Naive thymus-derived CD8-positive, alpha-beta T cell (primary cell): ENCODE measurements at regions of chr6 and their contacts with region 1.

Region 1: DNA sequence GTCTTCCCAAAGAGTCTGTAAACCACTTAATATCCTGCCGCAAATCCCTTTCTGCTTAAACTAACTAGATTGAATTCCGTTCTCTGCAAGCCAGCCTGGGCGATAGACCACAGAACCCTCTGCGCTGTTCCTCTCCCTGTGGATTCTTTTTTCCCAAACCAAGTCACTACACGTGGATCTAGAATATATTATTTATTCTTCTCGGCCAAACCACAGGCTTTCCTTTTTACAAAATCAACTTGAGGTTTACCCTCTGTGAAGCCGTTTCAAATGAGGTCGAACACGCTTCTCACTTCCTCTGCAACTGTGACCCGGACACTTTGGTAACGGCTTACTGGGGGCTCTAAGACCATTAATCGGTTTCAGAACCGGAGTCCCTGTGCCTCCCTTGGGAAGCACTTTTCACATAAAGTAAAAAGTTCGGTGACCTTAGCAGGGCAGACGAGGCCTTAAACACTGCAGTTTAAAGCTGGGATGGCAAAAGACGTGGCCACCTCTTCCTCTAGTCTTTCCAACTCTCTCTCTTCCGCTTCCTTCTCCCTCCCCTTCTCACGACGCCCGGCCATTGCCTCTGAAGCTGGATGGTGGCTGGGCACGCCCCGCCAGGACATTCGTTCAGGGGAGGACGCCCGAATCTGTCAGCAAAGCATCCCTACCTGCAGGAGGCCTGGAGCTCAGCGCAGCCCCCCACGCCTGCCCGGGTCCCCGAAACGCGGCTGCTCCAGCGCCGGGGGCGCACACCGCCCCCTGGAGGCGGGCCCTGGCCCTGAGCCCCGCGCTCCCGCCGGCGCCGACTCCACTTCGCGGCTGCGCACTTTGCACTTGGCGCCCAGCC is 55.0 kb upstream of the FOXC1 start:
- DNase-seq: peak; percentile 28 to 77 (median 59)
- ATAC-seq: peak; percentile 95 to 96
- H3K4me3 Mint-ChIP-seq: peak overlapping the region; percentile 71 to 88 (median 84)
- H3K27ac Mint-ChIP-seq: peak overlapping the region in 8 of 10 donors; percentile 36 to 94 (median 84)
- H3K4me1 Mint-ChIP-seq: peaks cover 13 to 30% (median 15%) of the 10 kb centered on the region in 4 donors
- H3K27me3 Mint-ChIP-seq: peaks cover 0 to 22% (median 1%) of the 10 kb centered on the region in 5 donors

Region 2: DNA sequence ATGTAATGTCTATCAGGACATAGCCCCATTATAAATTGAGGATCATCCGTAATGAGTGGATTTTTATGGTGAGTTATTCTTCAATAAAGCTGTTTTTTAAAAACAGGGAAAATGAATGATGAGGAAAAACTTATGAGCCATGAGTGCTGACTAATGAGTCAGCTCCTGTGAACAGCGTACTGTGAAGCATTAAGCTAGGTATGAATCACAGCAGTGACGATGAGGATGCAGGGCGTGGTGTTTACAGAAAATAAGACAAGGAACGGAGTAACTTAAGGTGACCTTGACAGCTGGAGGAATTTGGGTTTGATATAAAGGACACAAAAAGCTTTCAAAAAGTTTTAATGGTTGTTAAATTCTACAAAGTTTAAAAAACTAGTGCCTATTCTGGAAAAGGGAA is 69.0 kb before region 1 on chr6:
- POLR2A ChIA-PET with region 1: no interaction called
- DNase-seq: no peak
- ATAC-seq: no peak
- H3K4me3 Mint-ChIP-seq: no peak overlapping the region
- H3K27ac Mint-ChIP-seq: peak overlapping the region in 1 of 10 donors; percentile 41
- H3K4me1 Mint-ChIP-seq: peaks cover 0 to 6% (median 0%) of the 10 kb centered on the region in 4 donors
- H3K27me3 Mint-ChIP-seq: peaks cover 4 to 25% (median 9%) of the 10 kb centered on the region in 5 donors

Region 3: DNA sequence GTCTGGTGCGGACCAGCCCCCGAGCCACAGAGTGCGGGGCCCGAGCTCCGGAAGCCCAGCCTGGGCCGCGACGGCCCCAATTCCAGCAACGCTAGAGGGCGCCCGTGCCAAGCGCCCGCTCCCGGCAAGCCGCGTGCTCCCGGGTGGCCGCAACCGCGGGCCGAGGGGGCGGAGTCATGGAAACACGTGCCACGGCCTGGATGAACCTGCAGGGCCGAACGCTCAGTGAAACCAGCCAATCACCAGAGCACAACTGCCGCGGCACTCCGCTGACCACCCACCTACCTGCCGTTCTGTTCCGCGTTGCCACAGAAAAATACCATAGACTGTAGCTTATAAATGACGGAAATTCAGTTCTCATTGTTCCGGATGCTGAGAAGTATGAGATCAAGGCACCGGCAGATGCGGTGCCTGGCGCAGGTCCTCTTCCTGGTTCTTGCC is 30.6 kb before region 1 on chr6:
- POLR2A ChIA-PET with region 1: interaction called, 15 read pairs
- DNase-seq: peak; percentile 41 to 82 (median 68)
- ATAC-seq: peak; percentile 74 to 88
- H3K4me3 Mint-ChIP-seq: peak overlapping the region; percentile 62 to 84 (median 79)
- H3K27ac Mint-ChIP-seq: peak overlapping the region; percentile 53 to 95 (median 89)
- H3K4me1 Mint-ChIP-seq: peaks cover 21 to 51% (median 41%) of the 10 kb centered on the region in 4 donors
- H3K27me3 Mint-ChIP-seq: peaks cover 0 to 17% (median 6%) of the 10 kb centered on the region in 5 donors